ENCODE measurements at regions of chr13 and their contacts with region 1.

Region 1: GRCh38 chr13:27362064-27362883 is 62.1 kb upstream of the GTF3A start:
- DNase-seq: peak; percentile 89
- H3K4me3 ChIP-seq: peak overlapping the region; percentile 45 to 66
- H3K27ac ChIP-seq: no peak overlapping the region
- H3K4me1 ChIP-seq: peaks cover 0 to 5% of the 10 kb centered on the region in 2 experiments; a peak in 1 of 4 replicates
- H3K27me3 ChIP-seq: peaks cover 27% of the 10 kb centered on the region
- CTCF ChIP-seq: peak; percentile 92
- EP300 ChIP-seq: no peak
- RAD21 ChIP-seq: peak; percentile 90

Region 2: GRCh38 chr13:26977556-26977955 is 384.7 kb before region 1 on chr13:
- CTCF ChIA-PET with region 1: interaction called, 273 read pairs
- POLR2A ChIA-PET with region 1: no interaction called
- DNase-seq: no peak
- H3K4me3 ChIP-seq: no peak overlapping the region
- H3K27ac ChIP-seq: no peak overlapping the region
- H3K4me1 ChIP-seq: no peaks in the 10 kb centered on the region
- H3K27me3 ChIP-seq: no peaks in the 10 kb centered on the region
- CTCF ChIP-seq: no peak
- EP300 ChIP-seq: no peak
- RAD21 ChIP-seq: no peak

Region 3: GRCh38 chr13:27270594-27271520 is 91.4 kb before region 1 on chr13 and contains the start of gene RASL11A:
- CTCF ChIA-PET with region 1: interaction called, 13 read pairs
- POLR2A ChIA-PET with region 1: no interaction called
- DNase-seq: peak; percentile 92
- H3K4me3 ChIP-seq: peak within 1 kb of the TSS; percentile 80 to 84
- H3K27ac ChIP-seq: peak within 1 kb of the TSS; percentile 64 to 71
- H3K4me1 ChIP-seq: peaks cover 6 to 14% of the 10 kb centered on the region in 2 experiments; a peak in 1 of 4 replicates
- H3K27me3 ChIP-seq: no peaks in the 10 kb centered on the region
- CTCF ChIP-seq: peak; percentile 93
- EP300 ChIP-seq: no peak
- RAD21 ChIP-seq: no peak
- polyA plus RNA-seq, gene RASL11A: 1.2 and 2.7 TPM in 2 replicates

Region 4: DNA sequence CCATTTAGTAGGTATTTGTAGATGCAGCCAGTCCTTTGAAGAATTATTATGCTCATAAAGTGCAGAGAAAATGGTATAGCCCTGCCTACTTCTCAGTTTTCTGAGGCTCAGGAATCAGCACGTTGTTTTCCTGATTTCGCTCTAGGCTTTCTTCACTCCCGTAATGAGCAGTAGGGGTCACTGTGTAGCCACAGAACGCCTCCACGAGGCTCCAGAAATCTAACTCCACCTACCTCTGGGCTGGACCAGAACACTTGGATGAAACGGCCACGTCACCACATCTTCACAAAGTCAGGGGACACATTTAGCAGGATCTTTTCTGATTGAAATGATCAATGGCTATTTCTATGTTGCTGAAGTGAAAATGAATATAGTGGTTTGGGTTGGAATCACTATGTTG is 12.4 kb after region 1 on chr13:
- CTCF ChIA-PET with region 1: interaction called, 54 read pairs
- POLR2A ChIA-PET with region 1: no interaction called
- DNase-seq: peak; percentile 75
- H3K4me3 ChIP-seq: no peak overlapping the region; a peak in 1 of 4 replicates
- H3K27ac ChIP-seq: no peak overlapping the region
- H3K4me1 ChIP-seq: no peaks in the 10 kb centered on the region
- H3K27me3 ChIP-seq: peaks cover 62% of the 10 kb centered on the region
- CTCF ChIP-seq: peak; percentile 75
- EP300 ChIP-seq: no peak
- RAD21 ChIP-seq: peak; percentile 82

Region 5: GRCh38 chr13:27533155-27533643 is 170.9 kb after region 1 on chr13:
- CTCF ChIA-PET with region 1: interaction called, 11 read pairs
- POLR2A ChIA-PET with region 1: no interaction called
- DNase-seq: peak; percentile 85
- H3K4me3 ChIP-seq: peak overlapping the region; percentile 42 to 46
- H3K27ac ChIP-seq: no peak overlapping the region
- H3K4me1 ChIP-seq: peaks cover 0 to 3% of the 10 kb centered on the region in 2 experiments; a peak in 1 of 4 replicates
- H3K27me3 ChIP-seq: peaks cover 7% of the 10 kb centered on the region; the same call in 1 of the 2 replicates
- CTCF ChIP-seq: peak; percentile 93
- EP300 ChIP-seq: no peak
- RAD21 ChIP-seq: peak; percentile 82

Region 6: GRCh38 chr13:27549406-27549981 is 187.2 kb after region 1 on chr13:
- CTCF ChIA-PET with region 1: no interaction called
- POLR2A ChIA-PET with region 1: no interaction called
- DNase-seq: no peak
- H3K4me3 ChIP-seq: no peak overlapping the region
- H3K27ac ChIP-seq: no peak overlapping the region
- H3K4me1 ChIP-seq: peaks cover 0 to 11% of the 10 kb centered on the region in 2 experiments; a peak in 2 of 4 replicates
- H3K27me3 ChIP-seq: no peaks in the 10 kb centered on the region
- CTCF ChIP-seq: no peak
- EP300 ChIP-seq: no peak
- RAD21 ChIP-seq: no peak

Measured in SK-N-SH (cell line).